Sigmoid colon (tissue), 7 donors: ENCODE measurements at regions of chr2 and their contacts with region 1.

Region 1: GRCh38 chr2:186589612-186590349 is at the start of gene ITGAV:
- DNase-seq: peak; percentile 96
- H3K4me3 ChIP-seq: peak within 1 kb of the TSS; percentile 78 to 98 (median 90)
- H3K27ac ChIP-seq: peak within 1 kb of the TSS; percentile 94 to 99 (median 96)
- H3K4me1 ChIP-seq: peaks cover 0 to 41% (median 32%) of the 10 kb centered on the region in 4 donors
- H3K27me3 ChIP-seq: no peaks in the 10 kb centered on the region
- CTCF ChIP-seq: no peak
- EP300 ChIP-seq: no peak
- POLR2A ChIP-seq: peak; percentile 75 to 84
- total RNA-seq, gene ITGAV: 67.1 to 117 (median 70.3) TPM

Region 2: DNA sequence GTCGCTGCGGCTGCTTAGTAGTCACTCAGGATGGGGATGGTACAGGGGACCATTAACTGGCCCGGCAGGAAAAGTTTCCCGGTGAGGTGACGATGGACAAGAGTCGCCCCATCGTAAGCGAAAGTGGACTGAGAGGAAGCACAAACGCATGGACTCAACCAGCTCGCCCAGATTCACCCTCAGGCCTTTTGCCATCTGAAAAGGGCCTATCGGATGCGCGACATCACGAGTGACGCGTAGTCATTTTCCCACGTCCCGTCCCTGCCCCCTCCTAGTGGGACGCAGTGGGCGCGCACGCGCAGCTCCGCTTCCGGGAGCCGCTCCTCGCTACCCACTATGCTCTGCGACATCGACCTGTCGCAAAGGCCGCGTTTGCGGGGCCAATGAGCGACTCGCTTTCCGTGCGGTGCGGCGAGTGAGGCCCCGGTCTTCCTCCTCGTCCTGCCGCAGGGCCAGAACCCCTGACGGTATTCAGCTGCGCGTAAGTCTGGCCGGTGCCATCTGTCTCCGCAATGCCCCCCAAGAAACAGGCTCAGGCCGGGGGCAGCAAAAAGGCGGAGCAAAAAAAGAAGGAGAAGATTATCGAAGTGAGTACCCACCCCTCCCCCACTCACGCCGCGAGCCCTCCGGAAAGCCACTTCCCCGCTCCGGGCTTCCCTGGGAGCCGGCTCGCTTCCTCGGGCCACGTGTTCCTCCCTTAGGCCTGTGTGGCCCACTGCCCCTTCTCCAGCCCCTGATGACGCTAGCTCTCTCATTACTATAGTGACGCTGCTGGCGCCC is 103.7 kb before region 1 on chr2 and contains the start of gene ZC3H15:
- intact Hi-C with region 1: loop called (anchors 5 kb)
- DNase-seq: peak; percentile 99
- H3K4me3 ChIP-seq: peak within 1 kb of the TSS; percentile 61 to 95 (median 85)
- H3K27ac ChIP-seq: peak within 1 kb of the TSS; percentile 91 to 95 (median 92)
- H3K4me1 ChIP-seq: peaks cover 0 to 54% (median 36%) of the 10 kb centered on the region in 4 donors
- H3K27me3 ChIP-seq: no peaks in the 10 kb centered on the region
- CTCF ChIP-seq: no peak
- EP300 ChIP-seq: peak in 2 of 4 donors; percentile 3 to 87
- POLR2A ChIP-seq: peak; percentile 73 to 80
- total RNA-seq, gene ZC3H15: 60.3 to 76.7 (median 62.0) TPM

Region 3: GRCh38 chr2:186503848-186504606 is 85.8 kb before region 1 on chr2:
- intact Hi-C with region 1: loop called (anchors 5 kb)
- DNase-seq: no peak
- H3K4me3 ChIP-seq: no peak overlapping the region
- H3K27ac ChIP-seq: no peak overlapping the region
- H3K4me1 ChIP-seq: peaks cover 0 to 7% (median 0%) of the 10 kb centered on the region in 4 donors
- H3K27me3 ChIP-seq: no peaks in the 10 kb centered on the region
- CTCF ChIP-seq: peak; percentile 25 to 62 (median 38)
- EP300 ChIP-seq: no peak
- POLR2A ChIP-seq: no peak

Region 4: DNA sequence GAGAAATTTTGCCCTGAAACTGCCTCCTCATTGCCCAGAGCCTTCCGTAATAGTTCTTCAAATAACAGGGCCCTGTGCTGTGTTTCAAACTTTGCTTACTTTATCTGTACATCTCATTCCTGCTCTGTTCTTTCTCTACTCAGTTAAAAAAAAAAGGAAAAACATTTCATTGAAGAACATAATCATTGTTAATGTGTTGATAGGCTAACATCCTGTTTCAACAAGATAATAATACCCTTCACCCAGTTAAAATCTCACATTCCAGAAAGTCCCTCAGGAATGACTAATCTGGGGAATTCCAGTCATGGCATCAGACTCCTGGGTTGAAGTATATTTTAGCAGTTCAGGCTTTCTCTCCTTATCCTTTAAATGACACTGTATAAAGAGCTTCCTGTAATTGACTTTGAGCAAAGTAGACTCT is 45.5 kb before region 1 on chr2:
- intact Hi-C with region 1: loop called (anchors 5 kb)
- DNase-seq: no peak
- H3K4me3 ChIP-seq: no peak overlapping the region
- H3K27ac ChIP-seq: peak overlapping the region; percentile 43 to 71 (median 69)
- H3K4me1 ChIP-seq: peaks cover 0 to 27% (median 26%) of the 10 kb centered on the region in 4 donors
- H3K27me3 ChIP-seq: no peaks in the 10 kb centered on the region
- CTCF ChIP-seq: no peak
- EP300 ChIP-seq: no peak
- POLR2A ChIP-seq: no peak

Region 5: DNA sequence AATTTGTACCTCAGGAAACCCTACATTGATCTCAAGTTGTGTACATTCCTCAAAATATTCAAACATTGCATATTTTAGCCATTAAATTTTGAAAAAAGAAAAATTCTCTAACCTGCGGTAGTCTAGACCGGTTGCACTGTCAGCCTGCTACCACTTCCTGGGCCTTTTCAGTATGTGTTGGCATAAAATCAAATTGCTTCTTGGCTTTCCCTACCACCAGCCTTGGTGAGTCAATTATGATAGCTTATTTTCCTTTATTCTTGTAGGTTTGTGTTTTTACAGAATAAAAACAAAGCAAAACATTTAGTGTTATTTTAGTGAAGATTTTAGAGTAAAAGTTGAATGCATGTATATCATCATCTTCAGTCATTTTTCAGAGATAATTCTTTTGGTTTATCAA is 165.3 kb after region 1 on chr2:
- intact Hi-C with region 1: no loop called
- DNase-seq: no peak
- H3K4me3 ChIP-seq: no peak overlapping the region
- H3K27ac ChIP-seq: no peak overlapping the region
- H3K4me1 ChIP-seq: no peaks in the 10 kb centered on the region
- H3K27me3 ChIP-seq: no peaks in the 10 kb centered on the region
- CTCF ChIP-seq: no peak
- EP300 ChIP-seq: no peak
- POLR2A ChIP-seq: no peak